Heart left ventricle (tissue), 16 donors: ENCODE measurements at regions of chr18 and their contacts with region 1.

Region 1: DNA sequence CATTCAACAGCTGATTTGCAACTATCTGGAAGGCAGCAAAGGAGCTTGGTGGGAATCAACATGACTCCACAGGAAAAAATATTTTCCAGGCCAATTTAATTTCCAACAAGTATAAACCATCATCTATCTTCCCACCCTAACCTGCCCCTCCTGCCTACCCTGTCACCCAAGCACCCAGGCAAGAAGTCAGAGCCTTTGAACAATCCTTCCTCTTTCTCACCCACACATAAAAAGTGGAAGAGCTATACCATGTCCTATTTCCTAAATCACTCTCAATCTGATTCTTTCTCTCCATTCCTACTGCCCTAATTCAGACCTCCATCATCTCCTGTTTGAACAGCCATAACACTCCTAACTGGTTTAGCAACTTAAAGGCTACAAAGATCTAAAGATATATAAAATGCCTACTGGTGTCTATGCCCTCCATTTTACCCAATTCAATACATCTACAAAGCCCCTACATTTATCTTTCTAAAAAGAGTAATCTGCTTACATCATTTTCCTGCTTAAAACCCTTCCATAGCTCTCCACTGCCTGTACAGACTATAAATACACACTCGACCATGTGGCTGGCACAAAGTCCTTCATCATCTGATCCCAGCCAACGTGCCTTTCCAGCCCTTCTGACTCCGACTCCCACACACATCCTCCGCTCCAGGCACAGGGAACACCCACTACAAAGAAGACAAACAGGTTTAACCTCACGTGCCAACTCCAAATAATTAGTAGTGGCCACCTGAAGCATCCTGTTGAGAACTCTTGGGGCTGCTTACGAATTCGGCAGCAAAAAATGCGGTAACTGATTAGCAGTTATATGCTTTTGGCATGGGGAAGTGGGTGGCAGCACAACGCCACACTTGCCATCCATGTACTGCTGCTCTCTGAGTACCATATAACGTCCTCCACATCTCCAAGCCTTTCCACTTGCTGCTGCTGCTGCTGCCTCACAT is 12.4 kb downstream of the SPIRE1 start:
- DNase-seq: peak in 4 of 5 donors; percentile 64 to 77 (median 68)
- ATAC-seq: peak; percentile 96 to 98 (median 96)
- H3K4me3 ChIP-seq: peak overlapping the region in 5 of 12 donors; percentile 11 to 32 (median 22)
- H3K27ac ChIP-seq: peak overlapping the region; percentile 46 to 91 (median 76)
- H3K4me1 ChIP-seq: peaks cover 0 to 56% (median 19%) of the 10 kb centered on the region in 12 donors
- H3K27me3 ChIP-seq: no peaks in the 10 kb centered on the region
- CTCF ChIP-seq: no peak
- POLR2A ChIP-seq: no peak

Region 2: GRCh38 chr18:12552884-12553242 is 92.7 kb before region 1 on chr18:
- intact Hi-C with region 1: loop called in 3 of 10 experiments (anchors 10 kb)
- DNase-seq: no peak
- ATAC-seq: no peak
- H3K4me3 ChIP-seq: no peak overlapping the region
- H3K27ac ChIP-seq: peak overlapping the region in 1 of 12 donors; percentile 10
- H3K4me1 ChIP-seq: peaks cover 0 to 18% (median 6%) of the 10 kb centered on the region in 12 donors
- H3K27me3 ChIP-seq: no peaks in the 10 kb centered on the region
- CTCF ChIP-seq: no peak
- POLR2A ChIP-seq: no peak

Region 3: DNA sequence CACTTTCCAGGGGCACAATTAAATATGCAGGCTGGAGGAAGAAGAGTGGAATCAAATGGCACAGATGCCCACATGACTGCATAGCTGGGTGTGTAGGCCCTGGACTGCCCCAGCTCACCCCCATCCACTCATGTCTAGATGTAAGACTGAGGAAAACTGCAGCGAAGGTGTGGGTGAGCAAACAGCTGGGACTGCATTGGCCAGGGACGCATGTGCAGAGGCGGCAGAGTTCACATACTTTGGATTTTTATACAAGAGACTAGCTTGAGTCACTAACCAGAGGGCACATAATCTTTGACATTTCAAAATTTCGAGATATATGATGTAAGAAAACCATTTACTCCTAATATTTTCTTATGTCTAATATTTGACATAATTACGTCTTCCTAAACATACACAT is 47.8 kb before region 1 on chr18:
- intact Hi-C with region 1: loop called in 2 of 10 experiments (anchors 5 kb)
- DNase-seq: peak in 3 of 5 donors; percentile 14 to 47 (median 34)
- ATAC-seq: peak; percentile 66 to 82 (median 80)
- H3K4me3 ChIP-seq: no peak overlapping the region
- H3K27ac ChIP-seq: peak overlapping the region in 11 of 12 donors; percentile 15 to 60 (median 46)
- H3K4me1 ChIP-seq: peaks cover 0 to 49% (median 22%) of the 10 kb centered on the region in 12 donors
- H3K27me3 ChIP-seq: no peaks in the 10 kb centered on the region
- CTCF ChIP-seq: no peak
- POLR2A ChIP-seq: no peak

Region 4: GRCh38 chr18:12904012-12904516 is 258.5 kb after region 1 on chr18:
- intact Hi-C with region 1: no loop called
- DNase-seq: peak in 2 of 5 donors; percentile 34 to 51
- ATAC-seq: peak in 2 of 4 donors; percentile 52 to 62
- H3K4me3 ChIP-seq: no peak overlapping the region
- H3K27ac ChIP-seq: peak overlapping the region in 1 of 12 donors; percentile 34
- H3K4me1 ChIP-seq: peaks cover 0 to 27% (median 5%) of the 10 kb centered on the region in 12 donors
- H3K27me3 ChIP-seq: peaks cover 0 to 8% (median 0%) of the 10 kb centered on the region in 9 donors
- CTCF ChIP-seq: no peak
- POLR2A ChIP-seq: no peak